Activated B cell treated with CpG ODN at 0.5 μM for 24 hours (primary cell): ENCODE measurements at regions of chr11 and their contacts with region 1.

Region 1: GRCh38 chr11:33829433-33830141 is 55.3 kb upstream of the FBXO3 start:
- DNase-seq: no peak
- ATAC-seq: peak; percentile 83
- H3K4me3 Mint-ChIP-seq: peak overlapping the region; percentile 80
- H3K27ac Mint-ChIP-seq: no peak overlapping the region
- H3K4me1 Mint-ChIP-seq: peaks cover 5% of the 10 kb centered on the region
- H3K27me3 Mint-ChIP-seq: peaks cover 50% of the 10 kb centered on the region
- CTCF ChIP-seq: no peak

Region 2: GRCh38 chr11:32809313-32809712 is 1020.3 kb before region 1 on chr11:
- CTCF ChIA-PET with region 1: no interaction called
- POLR2A ChIA-PET with region 1: no interaction called
- intact Hi-C with region 1: loop called (anchors 10 kb)
- DNase-seq: no peak
- ATAC-seq: peak; percentile 66
- H3K4me3 Mint-ChIP-seq: no peak overlapping the region
- H3K27ac Mint-ChIP-seq: no peak overlapping the region
- H3K4me1 Mint-ChIP-seq: no peaks in the 10 kb centered on the region
- H3K27me3 Mint-ChIP-seq: no peaks in the 10 kb centered on the region
- CTCF ChIP-seq: no peak

Region 3: GRCh38 chr11:32960553-32961164 is 868.9 kb before region 1 on chr11:
- CTCF ChIA-PET with region 1: no interaction called
- POLR2A ChIA-PET with region 1: no interaction called
- intact Hi-C with region 1: loop called (anchors 1 kb)
- DNase-seq: no peak
- ATAC-seq: no peak
- H3K4me3 Mint-ChIP-seq: no peak overlapping the region
- H3K27ac Mint-ChIP-seq: no peak overlapping the region
- H3K4me1 Mint-ChIP-seq: no peaks in the 10 kb centered on the region
- H3K27me3 Mint-ChIP-seq: no peaks in the 10 kb centered on the region
- CTCF ChIP-seq: no peak

Region 4: GRCh38 chr11:33542921-33543320 is 286.7 kb before region 1 on chr11:
- CTCF ChIA-PET with region 1: no interaction called
- POLR2A ChIA-PET with region 1: no interaction called
- intact Hi-C with region 1: loop called (anchors 1 kb)
- DNase-seq: peak; percentile 20
- ATAC-seq: no peak
- H3K4me3 Mint-ChIP-seq: no peak overlapping the region
- H3K27ac Mint-ChIP-seq: no peak overlapping the region
- H3K4me1 Mint-ChIP-seq: no peaks in the 10 kb centered on the region
- H3K27me3 Mint-ChIP-seq: peaks cover 11% of the 10 kb centered on the region
- CTCF ChIP-seq: no peak

Region 5: GRCh38 chr11:33778675-33779074 is 50.9 kb before region 1 on chr11:
- CTCF ChIA-PET with region 1: no interaction called
- POLR2A ChIA-PET with region 1: no interaction called
- intact Hi-C with region 1: no loop called
- DNase-seq: no peak
- ATAC-seq: no peak
- H3K4me3 Mint-ChIP-seq: no peak overlapping the region
- H3K27ac Mint-ChIP-seq: no peak overlapping the region
- H3K4me1 Mint-ChIP-seq: peaks cover 17% of the 10 kb centered on the region
- H3K27me3 Mint-ChIP-seq: peaks cover 33% of the 10 kb centered on the region
- CTCF ChIP-seq: no peak

Region 6: DNA sequence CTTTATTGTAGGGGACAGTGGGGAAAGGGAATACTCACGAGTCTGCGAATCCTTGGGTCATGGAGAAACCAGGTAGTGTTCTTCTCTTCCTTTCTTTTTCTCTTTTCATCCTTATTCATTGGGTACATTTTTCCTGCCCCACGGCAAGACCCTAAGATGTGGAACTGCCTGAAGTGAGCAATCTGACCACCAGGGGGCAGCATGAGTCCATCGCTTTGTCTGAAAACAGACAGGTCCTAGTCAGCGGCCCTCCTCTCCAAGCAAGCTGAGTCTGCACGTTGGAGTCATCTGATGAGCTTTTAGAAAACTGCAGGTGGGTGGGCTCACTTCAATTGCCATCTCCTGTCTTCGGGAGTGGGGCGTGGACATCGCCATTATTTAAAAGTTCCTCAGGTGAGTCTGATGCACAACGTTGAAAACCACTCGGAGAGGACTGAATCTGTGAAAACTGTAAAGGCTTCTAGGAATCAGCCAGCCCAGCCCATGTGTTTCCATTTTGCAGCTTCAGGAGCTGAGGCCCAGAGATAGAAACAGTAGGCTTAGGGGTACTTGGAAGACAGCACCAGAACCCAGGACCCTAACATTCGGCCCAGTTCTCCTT is 21.3 kb before region 1 on chr11:
- CTCF ChIA-PET with region 1: interaction called, 62 read pairs
- POLR2A ChIA-PET with region 1: no interaction called
- intact Hi-C with region 1: loop called (anchors 1 kb)
- DNase-seq: peak; percentile 76
- ATAC-seq: peak; percentile 91
- H3K4me3 Mint-ChIP-seq: no peak overlapping the region
- H3K27ac Mint-ChIP-seq: no peak overlapping the region
- H3K4me1 Mint-ChIP-seq: no peaks in the 10 kb centered on the region
- H3K27me3 Mint-ChIP-seq: peaks cover 6% of the 10 kb centered on the region
- CTCF ChIP-seq: peak; percentile 95

Region 7: GRCh38 chr11:34013898-34014571 is 184.4 kb after region 1 on chr11:
- CTCF ChIA-PET with region 1: no interaction called
- POLR2A ChIA-PET with region 1: no interaction called
- intact Hi-C with region 1: no loop called
- DNase-seq: no peak
- ATAC-seq: no peak
- H3K4me3 Mint-ChIP-seq: no peak overlapping the region
- H3K27ac Mint-ChIP-seq: no peak overlapping the region
- H3K4me1 Mint-ChIP-seq: no peaks in the 10 kb centered on the region
- H3K27me3 Mint-ChIP-seq: peaks cover 12% of the 10 kb centered on the region
- CTCF ChIP-seq: no peak